Activated B cell treated with CpG ODN at 0.5 μM for 24 hours (primary cell): ENCODE measurements at regions of chr6 and their contacts with region 1.

Region 1: GRCh38 chr6:145963216-145964068 is 716 bp downstream of the SHPRH start:
- DNase-seq: peak; percentile 44
- ATAC-seq: peak; percentile 4
- H3K4me3 Mint-ChIP-seq: peak overlapping the region; percentile 99
- H3K27ac Mint-ChIP-seq: peak overlapping the region; percentile 96
- H3K4me1 Mint-ChIP-seq: peaks cover 45% of the 10 kb centered on the region
- H3K27me3 Mint-ChIP-seq: no peaks in the 10 kb centered on the region
- CTCF ChIP-seq: no peak

Region 2: DNA sequence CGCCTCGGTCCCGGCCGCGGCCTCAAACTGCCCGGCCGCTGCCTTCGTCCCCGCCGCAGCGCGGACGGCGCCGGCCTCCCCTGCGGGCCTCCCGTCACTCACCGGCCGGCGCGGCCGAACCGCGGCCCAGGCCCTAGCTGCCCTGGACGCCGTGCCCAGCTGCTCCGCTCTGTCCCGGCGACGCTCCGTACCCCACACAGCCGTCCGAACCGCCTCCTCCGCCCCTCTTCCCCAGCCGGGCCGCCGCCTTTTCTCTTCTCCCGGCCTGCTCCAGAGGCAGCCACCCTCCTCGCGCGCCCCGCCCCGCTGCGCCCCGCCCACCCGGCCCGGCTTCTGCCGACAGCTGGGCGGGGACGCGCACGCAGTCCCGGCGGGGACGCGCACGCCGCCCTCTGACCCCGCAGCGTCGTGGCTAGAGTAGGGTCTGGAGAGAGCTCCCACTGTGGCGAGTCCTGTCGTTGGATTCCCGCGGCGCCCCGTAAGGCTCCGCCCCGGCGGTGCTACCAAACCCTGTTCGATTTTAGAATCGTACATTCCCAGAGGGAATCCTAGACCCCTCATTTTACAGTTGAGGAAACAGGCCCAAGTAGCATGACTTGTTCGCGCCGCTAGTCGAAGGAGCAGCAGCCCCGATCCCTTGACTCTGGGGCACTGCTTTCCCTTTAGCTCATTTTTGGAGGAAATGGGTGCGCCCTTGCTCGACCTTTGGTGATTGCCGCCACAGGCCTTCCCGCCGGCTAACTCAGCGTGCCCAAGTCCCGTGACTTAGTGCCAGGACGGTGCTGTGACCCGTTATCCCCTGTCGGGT is 148.7 kb before region 1 on chr6 and contains the start of gene FBXO30:
- CTCF ChIA-PET with region 1: no interaction called
- POLR2A ChIA-PET with region 1: interaction called, 28 read pairs
- intact Hi-C with region 1: loop called (anchors 1 kb)
- DNase-seq: peak; percentile 97
- ATAC-seq: peak; percentile 91
- H3K4me3 Mint-ChIP-seq: peak within 1 kb of the TSS; percentile 95
- H3K27ac Mint-ChIP-seq: peak within 1 kb of the TSS; percentile 92
- H3K4me1 Mint-ChIP-seq: peaks cover 33% of the 10 kb centered on the region
- H3K27me3 Mint-ChIP-seq: no peaks in the 10 kb centered on the region
- CTCF ChIP-seq: no peak
- total RNA-seq, gene FBXO30: 5.8 and 6.1 TPM in 2 replicates

Region 3: GRCh38 chr6:145866456-145867396 is 96.7 kb before region 1 on chr6:
- CTCF ChIA-PET with region 1: no interaction called
- POLR2A ChIA-PET with region 1: interaction called, 5 read pairs
- intact Hi-C with region 1: loop called (anchors 2 kb)
- DNase-seq: no peak
- ATAC-seq: peak; percentile 30
- H3K4me3 Mint-ChIP-seq: peak overlapping the region; percentile 25
- H3K27ac Mint-ChIP-seq: peak overlapping the region; percentile 79
- H3K4me1 Mint-ChIP-seq: peaks cover 54% of the 10 kb centered on the region
- H3K27me3 Mint-ChIP-seq: no peaks in the 10 kb centered on the region
- CTCF ChIP-seq: no peak

Region 4: DNA sequence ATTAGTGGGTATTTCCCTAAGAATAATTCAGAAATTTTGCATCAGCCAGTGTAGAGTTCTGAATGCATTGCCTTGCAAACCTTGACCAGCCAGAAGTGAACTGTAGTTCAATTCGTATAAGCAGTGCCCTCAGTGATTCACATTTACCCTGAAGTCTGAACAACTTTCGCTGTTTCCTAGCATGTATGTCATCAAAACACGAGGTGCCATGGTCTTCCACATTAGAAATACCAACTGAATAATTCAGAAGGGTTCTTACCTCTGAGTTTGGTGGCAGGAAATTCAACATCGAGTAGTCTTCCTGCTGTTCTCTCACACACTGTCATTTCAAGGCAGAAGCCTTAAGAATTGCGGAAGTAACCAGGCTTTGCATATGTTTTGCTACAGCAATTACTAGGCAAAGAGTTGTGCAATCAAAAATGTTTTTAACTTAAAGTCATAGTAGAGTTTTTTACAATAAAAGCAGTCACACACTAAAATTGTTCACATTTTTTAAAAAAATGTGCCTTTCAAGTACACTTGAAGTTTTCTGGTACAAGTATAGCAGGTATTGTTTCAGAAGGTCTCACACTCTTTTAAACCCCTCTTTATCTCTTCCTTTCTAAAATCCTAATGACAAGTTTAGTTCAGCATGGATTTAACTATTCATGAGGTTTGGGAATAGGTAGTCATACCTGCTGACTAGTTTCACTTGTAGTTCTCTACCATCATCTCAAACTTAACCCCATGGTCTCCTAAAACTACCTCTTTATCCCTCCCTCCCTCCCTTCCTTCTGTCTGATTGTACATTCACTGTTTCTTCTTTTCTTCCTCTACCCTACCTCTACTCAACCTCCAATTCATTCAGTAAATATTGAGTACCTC is 1359.1 kb after region 1 on chr6:
- CTCF ChIA-PET with region 1: no interaction called
- POLR2A ChIA-PET with region 1: no interaction called
- intact Hi-C with region 1: loop called (anchors 1 kb)
- DNase-seq: no peak
- ATAC-seq: peak; percentile 93
- H3K4me3 Mint-ChIP-seq: peak overlapping the region; percentile 79
- H3K27ac Mint-ChIP-seq: peak overlapping the region; percentile 93
- H3K4me1 Mint-ChIP-seq: peaks cover 27% of the 10 kb centered on the region
- H3K27me3 Mint-ChIP-seq: no peaks in the 10 kb centered on the region
- CTCF ChIP-seq: no peak